ENCODE measurements at regions of chr6 and their contacts with region 1.

Region 1: DNA sequence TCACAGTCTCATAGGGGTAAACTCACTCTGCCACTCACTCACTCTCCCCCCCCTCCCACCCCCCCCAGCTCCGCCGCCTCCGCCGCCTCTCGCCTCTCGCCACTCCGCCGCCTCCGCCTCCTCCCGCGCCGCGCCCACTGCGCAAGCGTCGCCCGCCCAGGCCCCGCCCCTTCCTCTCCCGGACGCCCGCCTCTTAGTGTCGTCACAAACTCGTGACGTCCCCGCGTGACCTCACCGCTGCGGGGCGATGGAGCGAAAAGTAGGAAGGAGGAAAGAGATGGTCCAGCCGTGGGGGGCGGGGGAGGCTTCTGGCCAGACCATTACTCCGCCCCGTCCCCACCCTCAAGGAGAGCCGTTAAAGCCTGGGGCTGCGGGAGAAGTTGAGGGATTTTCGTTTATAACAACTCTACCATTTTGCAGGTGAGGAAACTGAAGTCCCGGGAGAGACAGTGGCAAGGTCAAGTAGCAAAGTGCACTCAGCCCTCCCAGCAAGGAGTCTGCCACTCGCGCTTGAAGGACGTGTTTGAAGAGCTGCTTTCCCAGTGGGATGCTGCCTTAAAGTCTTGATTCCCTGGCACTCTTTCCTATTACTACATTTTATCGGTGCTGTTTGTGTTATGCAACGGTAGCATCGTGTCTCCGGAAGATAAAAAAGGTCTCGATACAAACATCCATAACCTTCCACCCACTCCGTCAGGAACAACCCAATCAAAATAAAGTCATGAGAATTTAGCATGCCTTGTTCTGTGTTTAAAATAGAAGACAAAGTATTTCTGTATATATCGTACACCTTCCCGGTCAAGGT is at the start of gene ILRUN:
- DNase-seq: peak; percentile 97
- H3K4me3 Mint-ChIP-seq: peak within 1 kb of the TSS; percentile 87
- H3K27ac Mint-ChIP-seq: peak within 1 kb of the TSS; percentile 90
- H3K4me1 Mint-ChIP-seq: peaks cover 47% of the 10 kb centered on the region
- H3K27me3 Mint-ChIP-seq: no peaks in the 10 kb centered on the region
- total RNA-seq, gene ILRUN: 62.3 to 65.2 TPM

Region 2: DNA sequence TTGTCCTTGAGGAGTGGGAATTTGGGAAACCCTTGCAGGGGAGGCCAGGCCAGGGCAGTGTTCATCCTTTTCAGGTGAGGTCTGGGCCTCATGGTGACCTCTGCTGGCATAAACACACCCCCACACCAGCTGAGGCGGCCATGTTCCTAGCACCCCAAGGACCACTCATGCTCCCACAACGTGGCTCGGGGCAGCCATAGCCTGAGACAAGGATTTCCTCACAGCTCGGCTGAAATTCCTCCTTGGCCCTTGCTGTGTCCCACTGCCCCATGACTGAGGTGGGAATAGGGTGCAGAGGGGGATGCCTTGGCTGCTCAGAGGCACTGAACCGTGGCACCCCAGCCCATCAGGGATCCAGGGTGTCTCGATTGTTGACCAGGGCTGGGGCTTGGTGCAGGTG is 113.5 kb before region 1 on chr6:
- CTCF ChIA-PET with region 1: no interaction called
- POLR2A ChIA-PET with region 1: no interaction called
- intact Hi-C with region 1: no loop called
- DNase-seq: peak; percentile 25
- H3K4me3 Mint-ChIP-seq: no peak overlapping the region
- H3K27ac Mint-ChIP-seq: no peak overlapping the region
- H3K4me1 Mint-ChIP-seq: no peaks in the 10 kb centered on the region
- H3K27me3 Mint-ChIP-seq: no peaks in the 10 kb centered on the region

Region 3: DNA sequence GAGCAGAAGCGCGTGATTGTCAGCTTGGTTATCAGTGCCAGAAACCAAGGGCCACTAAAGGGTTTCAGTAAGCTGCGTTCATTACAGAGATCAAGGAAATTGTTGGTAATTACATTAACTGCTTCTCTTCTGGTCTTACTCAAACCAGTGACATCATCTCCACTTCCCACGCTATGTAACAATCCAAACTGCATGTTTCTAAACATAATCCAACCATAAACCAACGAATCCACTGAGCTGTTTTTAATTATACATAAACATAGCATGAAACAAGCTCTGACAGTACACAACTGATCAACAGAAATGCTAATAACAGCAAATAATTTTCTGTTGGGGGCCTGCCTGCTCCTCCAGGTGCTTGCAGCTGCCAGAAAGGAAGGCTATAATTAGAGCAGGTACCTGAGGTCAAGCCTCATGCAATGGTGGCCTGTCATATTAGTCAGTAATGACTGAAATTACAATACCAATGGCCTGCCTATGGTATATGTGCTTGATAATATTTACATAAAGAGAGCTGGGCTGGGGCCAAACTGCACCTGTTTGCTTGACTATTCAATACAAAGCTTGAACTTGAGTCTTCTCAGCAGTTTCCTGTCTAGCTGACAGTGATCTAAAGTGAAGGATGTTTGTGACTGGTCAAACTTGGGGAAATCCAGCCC is 40.4 kb before region 1 on chr6:
- CTCF ChIA-PET with region 1: no interaction called
- POLR2A ChIA-PET with region 1: interaction called, 28 read pairs
- intact Hi-C with region 1: loop called (anchors 5 kb)
- DNase-seq: peak; percentile 74
- H3K4me3 Mint-ChIP-seq: peak overlapping the region; percentile 67
- H3K27ac Mint-ChIP-seq: peak overlapping the region; percentile 93
- H3K4me1 Mint-ChIP-seq: peaks cover 54% of the 10 kb centered on the region
- H3K27me3 Mint-ChIP-seq: no peaks in the 10 kb centered on the region

Region 4: GRCh38 chr6:34671801-34672656 is 24.9 kb before region 1 on chr6:
- CTCF ChIA-PET with region 1: interaction called, 8 read pairs
- POLR2A ChIA-PET with region 1: interaction called, 21 read pairs
- intact Hi-C with region 1: loop called (anchors 1 kb)
- DNase-seq: peak; percentile 87
- H3K4me3 Mint-ChIP-seq: peak overlapping the region; percentile 71
- H3K27ac Mint-ChIP-seq: peak overlapping the region; percentile 92
- H3K4me1 Mint-ChIP-seq: peaks cover 60% of the 10 kb centered on the region
- H3K27me3 Mint-ChIP-seq: no peaks in the 10 kb centered on the region

Measured in activated CD4-positive, alpha-beta memory T cell treated with anti-CD3 and anti-CD28 coated beads for 36 hours (primary cell).